ENCODE measurements at regions of chr5 and their contacts with region 1.

Region 1: GRCh38 chr5:157596487-157596886 is 20.9 kb upstream of the ADAM19 start:
- DNase-seq: peak; percentile 87
- ATAC-seq: peak; percentile 73
- H3K4me3 ChIP-seq: peak overlapping the region in 1 of 5 experiments; percentile 31
- H3K4me3 Mint-ChIP-seq: peak overlapping the region; percentile 45
- H3K27ac ChIP-seq: peak overlapping the region; percentile 92 to 97
- H3K27ac Mint-ChIP-seq: peak overlapping the region; percentile 85
- H3K4me1 ChIP-seq: peaks cover 92 to 95% of the 10 kb centered on the region in 2 donors
- H3K4me1 Mint-ChIP-seq: peaks cover 93% of the 10 kb centered on the region
- H3K27me3 ChIP-seq: no peaks in the 10 kb centered on the region
- H3K27me3 Mint-ChIP-seq: no peaks in the 10 kb centered on the region
- CTCF ChIP-seq: no peak

Region 2: DNA sequence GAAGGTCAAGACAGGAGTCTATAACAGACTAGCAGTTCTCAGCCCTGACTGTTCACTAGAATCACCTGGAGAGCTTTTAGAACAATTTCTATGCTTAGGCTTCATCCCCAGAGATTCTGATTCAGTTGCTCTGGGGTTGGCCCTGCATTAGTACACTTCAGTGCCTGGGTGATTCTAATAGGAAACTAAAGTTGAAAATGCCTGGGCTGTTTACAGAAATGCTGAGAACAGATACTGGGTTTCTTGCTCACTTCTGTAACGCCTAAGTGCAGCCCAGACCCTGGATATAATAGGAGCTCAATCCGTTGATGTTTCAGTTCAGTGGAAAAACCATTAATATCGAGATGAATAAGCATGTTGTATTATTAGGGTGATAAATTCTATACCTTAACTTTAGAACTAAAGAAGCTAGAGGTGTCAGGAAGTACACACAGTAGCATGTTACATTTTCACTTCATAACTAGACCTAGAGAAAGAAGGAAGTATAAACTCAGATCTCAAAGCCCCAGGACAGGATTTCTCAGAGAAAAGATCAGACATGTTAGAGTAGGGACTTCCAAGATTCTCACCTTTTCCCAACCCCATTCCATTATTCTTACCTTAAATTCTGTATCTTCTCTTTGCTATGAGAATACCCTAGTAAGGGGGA is 508.0 kb before region 1 on chr5:
- CTCF ChIA-PET with region 1: no interaction called
- POLR2A ChIA-PET with region 1: no interaction called
- intact Hi-C with region 1: no loop called
- DNase-seq: no peak
- ATAC-seq: no peak
- H3K4me3 ChIP-seq: no peak overlapping the region
- H3K4me3 Mint-ChIP-seq: no peak overlapping the region
- H3K27ac ChIP-seq: no peak overlapping the region
- H3K27ac Mint-ChIP-seq: peak overlapping the region; percentile 8
- H3K4me1 ChIP-seq: no peaks in the 10 kb centered on the region
- H3K4me1 Mint-ChIP-seq: no peaks in the 10 kb centered on the region
- H3K27me3 ChIP-seq: no peaks in the 10 kb centered on the region
- H3K27me3 Mint-ChIP-seq: no peaks in the 10 kb centered on the region
- CTCF ChIP-seq: no peak

Region 3: GRCh38 chr5:157651623-157652549 is 55.4 kb after region 1 on chr5 and contains the start of gene SOX30:
- CTCF ChIA-PET with region 1: interaction called, 18 read pairs
- POLR2A ChIA-PET with region 1: interaction called, 3 read pairs
- intact Hi-C with region 1: loop called (anchors 2 kb)
- DNase-seq: peak; percentile 92
- ATAC-seq: peak; percentile 97
- H3K4me3 ChIP-seq: peak within 1 kb of the TSS in 4 of 5 experiments; percentile 46 to 60 (median 58)
- H3K4me3 Mint-ChIP-seq: peak within 1 kb of the TSS; percentile 89
- H3K27ac ChIP-seq: peak within 1 kb of the TSS; percentile 67 to 77
- H3K27ac Mint-ChIP-seq: peak within 1 kb of the TSS; percentile 90
- H3K4me1 ChIP-seq: peaks cover 34 to 36% of the 10 kb centered on the region in 2 donors
- H3K4me1 Mint-ChIP-seq: peaks cover 42% of the 10 kb centered on the region
- H3K27me3 ChIP-seq: no peaks in the 10 kb centered on the region
- H3K27me3 Mint-ChIP-seq: no peaks in the 10 kb centered on the region
- CTCF ChIP-seq: peak; percentile 59
- total RNA-seq, gene SOX30: 0.29 and 0.49 TPM in 2 replicates